Endothelial cell of umbilical vein (primary cell): ENCODE measurements at regions of chr20 and their contacts with region 1.

Region 1: GRCh38 chr20:3679749-3680700 is 1.8 kb downstream of the ADAM33 start:
- DNase-seq: no peak
- H3K4me3 ChIP-seq: no peak overlapping the region
- H3K27ac ChIP-seq: no peak overlapping the region
- H3K4me1 ChIP-seq: no peaks in the 10 kb centered on the region
- H3K27me3 ChIP-seq: peaks cover 25 to 33% of the 10 kb centered on the region in 2 experiments
- CTCF ChIP-seq: no peak
- POLR2A ChIP-seq: no peak

Region 2: GRCh38 chr20:3704087-3704486 is 24.1 kb after region 1 on chr20:
- CTCF ChIA-PET with region 1: interaction called, 34 read pairs
- POLR2A ChIA-PET with region 1: interaction called, 8 read pairs
- dilution Hi-C with region 1: no loop called
- intact Hi-C with region 1: loop called (anchors 1 kb)
- DNase-seq: no peak
- H3K4me3 ChIP-seq: no peak overlapping the region
- H3K27ac ChIP-seq: no peak overlapping the region
- H3K4me1 ChIP-seq: no peaks in the 10 kb centered on the region
- H3K27me3 ChIP-seq: no peaks in the 10 kb centered on the region
- CTCF ChIP-seq: no peak
- POLR2A ChIP-seq: no peak

Region 3: GRCh38 chr20:3767427-3768341 is 87.7 kb after region 1 on chr20 and contains the start of gene ADISSP:
- CTCF ChIA-PET with region 1: interaction called, 34 read pairs
- POLR2A ChIA-PET with region 1: no interaction called
- dilution Hi-C with region 1: no loop called
- intact Hi-C with region 1: loop called (anchors 1 kb)
- DNase-seq: peak; percentile 98
- H3K4me3 ChIP-seq: peak within 1 kb of the TSS; percentile 61 to 71 (median 61)
- H3K27ac ChIP-seq: peak within 1 kb of the TSS; percentile 55
- H3K4me1 ChIP-seq: peaks cover 25% of the 10 kb centered on the region
- H3K27me3 ChIP-seq: no peaks in the 10 kb centered on the region
- CTCF ChIP-seq: no peak
- POLR2A ChIP-seq: peak; percentile 72
- total RNA-seq, gene ADISSP: 55.0 and 55.8 TPM in 2 replicates

Region 4: GRCh38 chr20:3854462-3854871 is 174.4 kb after region 1 on chr20:
- CTCF ChIA-PET with region 1: interaction called, 13 read pairs
- POLR2A ChIA-PET with region 1: interaction called, 6 read pairs
- dilution Hi-C with region 1: no loop called
- intact Hi-C with region 1: loop called (anchors 1 kb)
- DNase-seq: no peak
- H3K4me3 ChIP-seq: no peak overlapping the region
- H3K27ac ChIP-seq: no peak overlapping the region
- H3K4me1 ChIP-seq: no peaks in the 10 kb centered on the region
- H3K27me3 ChIP-seq: no peaks in the 10 kb centered on the region
- CTCF ChIP-seq: no peak
- POLR2A ChIP-seq: no peak